Body of pancreas (tissue), 4 donors: ENCODE measurements at regions of chr18 and their contacts with region 1.

Region 1: GRCh38 chr18:21513292-21513691 is 87.2 kb downstream of the ESCO1 start:
- DNase-seq: no peak
- ATAC-seq: no peak
- H3K4me3 ChIP-seq: no peak overlapping the region
- H3K27ac ChIP-seq: no peak overlapping the region
- H3K4me1 ChIP-seq: no peaks in the 10 kb centered on the region
- H3K27me3 ChIP-seq: no peaks in the 10 kb centered on the region
- CTCF ChIP-seq: no peak
- POLR2A ChIP-seq: no peak

Region 2: DNA sequence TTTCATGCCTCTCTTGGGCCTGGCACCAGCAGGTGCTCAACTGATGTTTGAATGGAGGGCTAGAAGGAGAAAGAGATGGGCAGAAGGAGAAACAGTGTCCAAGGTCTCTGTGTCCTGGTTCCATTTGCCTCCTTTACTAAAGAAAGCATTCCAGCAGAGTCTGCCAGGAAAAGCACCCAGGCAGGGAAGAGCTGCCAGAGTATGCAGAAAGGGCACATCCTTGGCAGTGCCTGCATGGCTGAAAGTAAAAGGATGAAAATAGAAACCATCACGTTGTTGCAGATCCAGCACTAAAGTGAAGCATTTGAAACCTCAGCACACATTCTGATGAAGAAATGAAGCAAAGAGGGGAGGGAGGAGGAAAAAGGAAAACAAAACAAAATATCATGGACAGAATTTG is 55.0 kb before region 1 on chr18:
- intact Hi-C with region 1: no loop called
- DNase-seq: no peak
- ATAC-seq: no peak
- H3K4me3 ChIP-seq: no peak overlapping the region
- H3K27ac ChIP-seq: no peak overlapping the region
- H3K4me1 ChIP-seq: no peaks in the 10 kb centered on the region
- H3K27me3 ChIP-seq: no peaks in the 10 kb centered on the region
- CTCF ChIP-seq: no peak
- POLR2A ChIP-seq: no peak

Region 3: GRCh38 chr18:21571772-21572171 is 58.5 kb after region 1 on chr18:
- intact Hi-C with region 1: loop called (anchors 10 kb)
- DNase-seq: no peak
- ATAC-seq: no peak
- H3K4me3 ChIP-seq: no peak overlapping the region
- H3K27ac ChIP-seq: no peak overlapping the region
- H3K4me1 ChIP-seq: no peaks in the 10 kb centered on the region
- H3K27me3 ChIP-seq: no peaks in the 10 kb centered on the region
- CTCF ChIP-seq: no peak
- POLR2A ChIP-seq: no peak